ENCODE measurements at regions of chr12 and their contacts with region 1.

Region 1: DNA sequence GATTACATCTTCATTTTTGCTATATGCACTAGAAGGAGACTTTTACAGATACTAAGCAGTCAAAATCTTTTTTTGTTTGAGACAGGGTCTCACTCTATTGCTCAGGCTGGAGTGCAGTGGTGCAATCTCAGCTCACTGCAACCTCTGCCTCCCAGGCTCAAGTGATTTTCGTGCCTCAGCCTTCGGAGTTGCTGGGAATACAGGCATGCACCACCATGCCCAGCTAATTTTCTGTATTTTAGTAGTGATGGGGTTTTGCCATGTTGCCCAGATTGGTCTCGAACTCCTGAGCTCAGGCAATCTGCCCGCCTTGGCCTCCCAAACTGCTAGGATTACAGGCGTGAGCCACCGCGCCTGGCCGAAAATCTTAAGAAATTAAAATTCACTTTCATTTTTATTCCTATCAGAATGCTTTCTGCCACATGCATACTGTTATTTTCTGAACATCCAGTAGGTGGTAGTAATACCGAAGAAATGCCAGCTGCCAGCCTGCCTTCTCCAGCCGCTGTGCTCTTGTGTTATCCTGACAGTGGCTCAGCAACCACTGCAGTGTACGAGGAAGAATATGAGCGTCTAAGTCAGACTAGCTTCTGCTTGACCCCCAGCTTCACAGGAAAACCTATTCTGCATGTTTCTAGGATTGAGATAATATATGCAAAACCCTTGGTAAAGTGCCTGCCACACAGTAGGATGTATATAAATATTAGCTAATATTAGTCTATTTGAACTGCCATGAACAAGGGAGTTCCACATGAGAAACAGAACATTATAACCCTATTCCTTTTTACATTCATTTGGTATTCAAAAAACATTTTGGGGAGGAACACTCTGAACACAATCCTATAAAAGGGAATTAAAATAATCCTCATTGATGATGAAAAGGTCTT is 54.2 kb downstream of the RPAP3 start:
- DNase-seq: peak; percentile 79
- H3K4me3 Mint-ChIP-seq: peak overlapping the region; percentile 21
- H3K27ac Mint-ChIP-seq: no peak overlapping the region
- H3K4me1 Mint-ChIP-seq: no peaks in the 10 kb centered on the region
- H3K27me3 Mint-ChIP-seq: no peaks in the 10 kb centered on the region
- CTCF ChIP-seq: peak; percentile 64

Region 2: DNA sequence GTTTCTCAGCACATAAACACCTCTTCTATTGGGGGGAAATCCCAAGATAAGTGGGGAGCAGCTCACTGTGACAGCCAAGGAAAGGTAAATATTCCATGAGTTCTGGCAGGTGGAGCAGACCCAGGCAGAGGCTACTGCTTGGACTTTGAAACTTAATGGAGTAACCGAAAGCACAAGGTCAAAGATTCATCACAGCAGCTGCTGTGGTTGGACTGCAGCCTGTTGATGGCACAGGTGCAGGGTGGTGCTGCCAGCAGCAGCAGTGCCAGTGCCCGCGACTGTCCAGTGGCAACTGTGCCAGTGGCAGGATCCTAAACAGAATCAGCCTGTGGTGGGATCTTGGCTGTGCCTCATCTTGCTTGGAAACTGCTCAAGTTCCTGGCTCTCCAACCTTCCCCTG is 2003.5 kb before region 1 on chr12:
- CTCF ChIA-PET with region 1: no interaction called
- POLR2A ChIA-PET with region 1: no interaction called
- intact Hi-C with region 1: no loop called
- DNase-seq: no peak
- H3K4me3 Mint-ChIP-seq: no peak overlapping the region
- H3K27ac Mint-ChIP-seq: no peak overlapping the region
- H3K4me1 Mint-ChIP-seq: peaks cover 7% of the 10 kb centered on the region
- H3K27me3 Mint-ChIP-seq: no peaks in the 10 kb centered on the region
- CTCF ChIP-seq: no peak

Region 3: GRCh38 chr12:47636908-47637780 is 14.5 kb before region 1 on chr12:
- CTCF ChIA-PET with region 1: interaction called, 11 read pairs
- POLR2A ChIA-PET with region 1: no interaction called
- intact Hi-C with region 1: no loop called
- DNase-seq: peak; percentile 70
- H3K4me3 Mint-ChIP-seq: no peak overlapping the region
- H3K27ac Mint-ChIP-seq: no peak overlapping the region
- H3K4me1 Mint-ChIP-seq: no peaks in the 10 kb centered on the region
- H3K27me3 Mint-ChIP-seq: no peaks in the 10 kb centered on the region
- CTCF ChIP-seq: peak; percentile 46

Region 4: GRCh38 chr12:47672068-47672467 is 20.5 kb after region 1 on chr12:
- CTCF ChIA-PET with region 1: interaction called, 10 read pairs
- POLR2A ChIA-PET with region 1: interaction called, 8 read pairs
- intact Hi-C with region 1: no loop called
- DNase-seq: no peak
- H3K4me3 Mint-ChIP-seq: no peak overlapping the region
- H3K27ac Mint-ChIP-seq: peak overlapping the region; percentile 5
- H3K4me1 Mint-ChIP-seq: no peaks in the 10 kb centered on the region
- H3K27me3 Mint-ChIP-seq: no peaks in the 10 kb centered on the region
- CTCF ChIP-seq: no peak

Region 5: DNA sequence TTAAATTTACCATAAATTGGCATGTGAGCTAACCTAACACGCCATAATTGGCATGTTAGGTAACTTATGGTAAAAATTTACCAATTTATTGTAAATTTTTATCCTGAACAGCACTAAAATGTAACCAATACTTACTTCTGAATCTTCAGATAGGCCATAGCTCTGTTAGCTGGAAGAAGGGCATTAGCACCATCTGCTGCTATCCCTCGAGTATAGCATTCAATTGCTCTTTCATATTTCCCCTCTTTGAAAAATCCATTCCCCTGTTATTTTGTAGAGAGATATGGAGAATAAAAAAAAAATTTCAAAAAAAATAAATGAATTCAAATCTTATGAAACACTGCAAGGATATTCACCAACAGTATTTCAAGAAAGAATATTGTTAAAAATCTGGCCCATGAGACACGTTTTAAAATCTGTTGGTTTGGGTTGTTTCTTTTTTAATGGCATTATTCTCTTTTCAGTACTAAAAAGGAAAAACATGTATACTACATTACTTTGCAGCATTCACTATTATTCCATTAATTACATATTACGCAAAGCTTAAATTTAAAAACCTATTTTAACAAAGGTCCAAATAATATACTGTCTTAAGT is 35.1 kb after region 1 on chr12:
- CTCF ChIA-PET with region 1: interaction called, 25 read pairs
- POLR2A ChIA-PET with region 1: no interaction called
- intact Hi-C with region 1: loop called (anchors 1 kb)
- DNase-seq: peak; percentile 44
- H3K4me3 Mint-ChIP-seq: no peak overlapping the region
- H3K27ac Mint-ChIP-seq: no peak overlapping the region
- H3K4me1 Mint-ChIP-seq: no peaks in the 10 kb centered on the region
- H3K27me3 Mint-ChIP-seq: no peaks in the 10 kb centered on the region
- CTCF ChIP-seq: peak; percentile 52

Measured in MCF 10A (cell line).